ENCODE measurements at regions of chr17 and their contacts with region 1.

Region 1: DNA sequence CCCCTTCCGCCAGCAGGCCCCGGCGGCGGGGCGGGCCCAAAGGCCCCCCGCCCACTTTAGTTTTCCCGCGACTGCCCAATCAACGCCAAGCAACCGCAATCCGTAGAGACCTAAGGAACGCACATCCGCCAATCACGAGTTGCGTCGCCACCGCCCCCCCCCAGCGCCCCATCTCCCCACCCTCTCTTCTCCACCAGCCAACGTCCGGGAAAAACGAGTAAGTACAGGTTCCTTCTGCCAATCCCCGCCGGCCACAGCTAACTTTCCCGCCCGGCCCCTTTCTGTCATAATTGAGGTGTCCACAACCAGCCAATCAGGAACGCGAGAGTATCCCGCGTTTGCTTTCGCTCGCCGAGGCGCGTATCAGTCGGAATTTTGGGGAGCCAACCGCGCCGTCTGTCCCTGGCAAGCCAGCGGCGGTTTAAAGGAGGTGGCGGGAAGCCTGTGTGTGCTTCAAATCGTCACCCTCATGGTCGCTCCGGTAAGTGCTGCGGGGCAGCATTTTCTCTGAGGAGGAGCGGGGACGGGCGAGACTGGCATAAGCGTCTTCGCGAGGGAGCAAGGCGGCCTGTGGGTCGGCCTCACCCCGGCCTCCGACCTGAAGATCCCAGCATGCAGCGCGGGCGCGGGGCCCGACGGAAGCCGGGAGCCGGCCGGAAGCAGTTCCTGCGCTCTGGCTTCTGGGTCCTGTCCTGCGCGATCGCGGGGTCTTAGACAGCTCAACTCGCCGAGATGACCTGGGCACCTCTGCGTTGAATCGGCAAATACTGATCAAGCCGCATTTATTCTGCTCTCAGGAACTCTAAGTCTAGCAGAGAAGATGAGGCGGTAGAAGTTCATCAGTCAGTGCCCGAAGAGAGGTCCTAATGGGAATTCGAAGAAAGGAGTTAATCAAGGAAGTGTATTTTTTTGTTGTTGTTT is at the start of gene MIS12:
- DNase-seq: peak; percentile 98
- ATAC-seq: peak; percentile 94
- H3K4me3 ChIP-seq: peak within 1 kb of the TSS; percentile 97
- H3K27ac ChIP-seq: peak within 1 kb of the TSS; percentile 98
- H3K4me1 ChIP-seq: peaks cover 2% of the 10 kb centered on the region; the same call in 1 of the 2 replicates
- H3K27me3 ChIP-seq: no peaks in the 10 kb centered on the region
- CTCF ChIP-seq: no peak
- POLR2A ChIP-seq: peak; percentile 88
- RAD21 ChIP-seq: peak; percentile 4; the same call in 1 of the 2 replicates
- total RNA-seq, gene MIS12: 11.7 and 18.1 TPM in 2 replicates

Region 2: DNA sequence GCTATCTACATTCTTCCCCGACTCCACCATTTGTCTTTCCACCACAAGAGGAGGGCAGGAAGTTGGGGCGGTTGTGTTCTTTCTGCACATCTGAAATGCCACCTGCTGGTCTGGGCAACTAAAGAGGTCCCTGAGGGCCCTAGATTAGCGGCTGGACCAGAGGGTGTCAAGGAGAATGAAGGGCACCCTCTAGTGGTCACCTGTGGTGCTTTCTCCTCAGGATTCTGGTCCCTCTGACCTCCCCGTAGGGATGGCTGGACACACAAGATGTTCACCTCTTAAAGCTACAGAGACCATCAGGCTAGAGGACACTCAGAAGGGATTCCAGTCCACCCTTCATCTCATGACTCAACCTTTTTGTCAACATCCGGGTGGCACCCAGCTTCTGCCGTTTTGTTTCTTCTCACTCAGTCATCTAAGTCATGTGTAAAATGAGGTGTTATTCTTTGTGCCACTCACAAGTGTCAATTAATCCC is 248.9 kb before region 1 on chr17:
- CTCF ChIA-PET with region 1: no interaction called
- POLR2A ChIA-PET with region 1: interaction called, 15 read pairs
- dilution Hi-C with region 1: no loop called
- in situ Hi-C with region 1: no loop called
- intact Hi-C with region 1: no loop called
- DNase-seq: peak; percentile 50
- ATAC-seq: peak; percentile 82
- H3K4me3 ChIP-seq: no peak overlapping the region
- H3K27ac ChIP-seq: no peak overlapping the region
- H3K4me1 ChIP-seq: no peaks in the 10 kb centered on the region
- H3K27me3 ChIP-seq: peaks cover 2% of the 10 kb centered on the region; the same call in 1 of the 2 replicates
- CTCF ChIP-seq: peak; percentile 59
- POLR2A ChIP-seq: no peak
- RAD21 ChIP-seq: peak; percentile 41

Region 3: DNA sequence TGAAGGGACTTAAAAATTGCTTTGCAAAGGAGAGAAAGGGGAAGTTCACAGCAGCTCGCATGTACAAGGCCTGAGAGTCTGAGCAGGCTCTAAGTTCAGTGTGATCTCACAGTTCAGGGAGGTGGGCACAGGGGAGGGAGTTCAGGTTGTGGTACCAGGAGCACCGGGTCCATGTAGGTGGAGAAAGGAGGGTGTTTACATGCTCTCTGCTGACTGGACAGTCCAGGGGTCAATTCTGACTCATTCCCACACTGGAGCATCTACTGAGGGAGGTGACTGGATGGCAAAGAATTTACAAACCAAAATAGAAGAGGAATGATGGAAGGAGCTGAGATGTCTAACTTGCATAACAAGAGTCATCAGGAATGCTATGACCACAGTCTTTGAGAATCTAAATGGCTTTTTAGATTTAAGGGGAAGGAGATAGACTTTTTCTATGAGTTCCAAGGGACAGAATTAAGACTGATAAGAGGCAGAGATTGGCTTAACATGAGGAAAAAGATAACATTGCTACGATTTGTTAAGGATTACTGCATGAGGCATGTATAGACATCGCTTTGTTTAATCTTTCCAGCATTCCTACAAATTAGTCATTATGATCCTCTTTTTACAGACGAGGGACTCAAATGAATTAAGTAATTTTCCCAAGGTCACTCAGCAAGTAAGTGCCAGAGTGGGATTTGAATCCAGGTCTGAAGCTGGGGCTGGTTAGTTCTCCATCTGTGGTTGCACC is 29.8 kb after region 1 on chr17:
- CTCF ChIA-PET with region 1: no interaction called
- POLR2A ChIA-PET with region 1: interaction called, 3 read pairs
- dilution Hi-C with region 1: no loop called
- in situ Hi-C with region 1: no loop called
- intact Hi-C with region 1: loop called (anchors 1 kb)
- DNase-seq: peak; percentile 100
- ATAC-seq: peak; percentile 95
- H3K4me3 ChIP-seq: no peak overlapping the region
- H3K27ac ChIP-seq: peak overlapping the region; percentile 99
- H3K4me1 ChIP-seq: peaks cover 20% of the 10 kb centered on the region
- H3K27me3 ChIP-seq: no peaks in the 10 kb centered on the region
- CTCF ChIP-seq: no peak
- POLR2A ChIP-seq: no peak
- RAD21 ChIP-seq: no peak

Region 4: DNA sequence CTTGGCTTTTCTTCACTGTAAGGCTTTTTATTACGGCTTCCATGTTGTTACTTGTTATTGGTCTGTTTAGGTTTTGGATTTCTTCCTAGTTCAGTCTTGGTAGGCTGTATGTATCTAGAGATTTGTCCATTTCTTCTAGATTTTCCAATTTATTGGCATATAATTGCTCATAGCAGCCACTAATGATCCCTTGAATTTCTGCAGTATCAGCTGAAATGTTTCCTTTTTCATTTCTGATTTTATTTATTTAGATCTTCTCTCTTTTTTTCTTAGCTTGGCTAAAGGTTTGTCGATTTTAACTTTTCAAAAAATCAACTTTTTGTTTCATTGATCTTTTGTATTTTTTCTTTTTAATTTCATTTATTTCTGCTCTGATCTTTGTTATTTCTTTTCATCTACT is 79.3 kb after region 1 on chr17:
- CTCF ChIA-PET with region 1: no interaction called
- POLR2A ChIA-PET with region 1: no interaction called
- dilution Hi-C with region 1: no loop called
- in situ Hi-C with region 1: no loop called
- intact Hi-C with region 1: loop called (anchors 5 kb)
- DNase-seq: no peak
- ATAC-seq: no peak
- H3K4me3 ChIP-seq: no peak overlapping the region
- H3K27ac ChIP-seq: no peak overlapping the region
- H3K4me1 ChIP-seq: no peaks in the 10 kb centered on the region
- H3K27me3 ChIP-seq: no peaks in the 10 kb centered on the region
- CTCF ChIP-seq: no peak
- POLR2A ChIP-seq: no peak
- RAD21 ChIP-seq: no peak